Activated B cell treated with CpG ODN at 0.5 μM for 24 hours (primary cell): ENCODE measurements at regions of chr17 and their contacts with region 1.

Region 1: GRCh38 chr17:40113110-40113906 is 8.5 kb upstream of the MSL1 start:
- DNase-seq: peak; percentile 80
- ATAC-seq: peak; percentile 87
- H3K4me3 Mint-ChIP-seq: peak overlapping the region; percentile 89
- H3K27ac Mint-ChIP-seq: peak overlapping the region; percentile 88
- H3K4me1 Mint-ChIP-seq: peaks cover 54% of the 10 kb centered on the region
- H3K27me3 Mint-ChIP-seq: no peaks in the 10 kb centered on the region
- CTCF ChIP-seq: no peak

Region 2: GRCh38 chr17:38605888-38606645 is 1507.2 kb before region 1 on chr17 and contains the start of gene SRCIN1:
- CTCF ChIA-PET with region 1: no interaction called
- POLR2A ChIA-PET with region 1: no interaction called
- intact Hi-C with region 1: no loop called
- DNase-seq: peak; percentile 46
- ATAC-seq: peak; percentile 57
- H3K4me3 Mint-ChIP-seq: peak within 1 kb of the TSS; percentile 72
- H3K27ac Mint-ChIP-seq: no peak within 1 kb of the TSS
- H3K4me1 Mint-ChIP-seq: peaks cover 15% of the 10 kb centered on the region
- H3K27me3 Mint-ChIP-seq: peaks cover 59% of the 10 kb centered on the region
- CTCF ChIP-seq: peak; percentile 80
- total RNA-seq, gene SRCIN1: 0.24 and 0.35 TPM in 2 replicates

Region 3: GRCh38 chr17:39903158-39903884 is 210.0 kb before region 1 on chr17:
- CTCF ChIA-PET with region 1: no interaction called
- POLR2A ChIA-PET with region 1: no interaction called
- intact Hi-C with region 1: no loop called
- DNase-seq: no peak
- ATAC-seq: peak; percentile 37
- H3K4me3 Mint-ChIP-seq: no peak overlapping the region
- H3K27ac Mint-ChIP-seq: no peak overlapping the region
- H3K4me1 Mint-ChIP-seq: peaks cover 5% of the 10 kb centered on the region
- H3K27me3 Mint-ChIP-seq: no peaks in the 10 kb centered on the region
- CTCF ChIP-seq: no peak

Region 4: GRCh38 chr17:39927101-39927928 is 186.0 kb before region 1 on chr17 and contains the starts of genes LRRC3C and ORMDL3:
- CTCF ChIA-PET with region 1: no interaction called
- POLR2A ChIA-PET with region 1: no interaction called
- intact Hi-C with region 1: no loop called
- DNase-seq: peak; percentile 91
- ATAC-seq: peak; percentile 92
- H3K4me3 Mint-ChIP-seq: peak within 1 kb of the TSS; percentile 97
- H3K27ac Mint-ChIP-seq: peak within 1 kb of the TSS; percentile 82
- H3K4me1 Mint-ChIP-seq: peaks cover 40% of the 10 kb centered on the region
- H3K27me3 Mint-ChIP-seq: no peaks in the 10 kb centered on the region
- CTCF ChIP-seq: no peak
- total RNA-seq, gene LRRC3C: not detected in 2 replicates
- total RNA-seq, gene ORMDL3: 38.5 and 49.1 TPM in 2 replicates

Region 5: GRCh38 chr17:40018211-40019121 is 94.8 kb before region 1 on chr17:
- CTCF ChIA-PET with region 1: interaction called, 27 read pairs
- POLR2A ChIA-PET with region 1: interaction called, 3 read pairs
- intact Hi-C with region 1: loop called (anchors 1 kb)
- DNase-seq: no peak
- ATAC-seq: no peak
- H3K4me3 Mint-ChIP-seq: no peak overlapping the region
- H3K27ac Mint-ChIP-seq: no peak overlapping the region
- H3K4me1 Mint-ChIP-seq: peaks cover 5% of the 10 kb centered on the region
- H3K27me3 Mint-ChIP-seq: peaks cover 2% of the 10 kb centered on the region
- CTCF ChIP-seq: no peak

Region 6: GRCh38 chr17:40062329-40063186 is 50.8 kb before region 1 on chr17 and contains the start of gene THRA:
- CTCF ChIA-PET with region 1: interaction called, 43 read pairs
- POLR2A ChIA-PET with region 1: interaction called, 13 read pairs
- intact Hi-C with region 1: loop called (anchors 1 kb)
- DNase-seq: peak; percentile 79
- ATAC-seq: peak; percentile 93
- H3K4me3 Mint-ChIP-seq: peak within 1 kb of the TSS; percentile 87
- H3K27ac Mint-ChIP-seq: peak within 1 kb of the TSS; percentile 78
- H3K4me1 Mint-ChIP-seq: peaks cover 39% of the 10 kb centered on the region
- H3K27me3 Mint-ChIP-seq: peaks cover under 1% of the 10 kb centered on the region
- CTCF ChIP-seq: no peak
- total RNA-seq, gene THRA: 5.4 and 5.9 TPM in 2 replicates

Region 7: GRCh38 chr17:40086150-40087044 is 26.9 kb before region 1 on chr17:
- CTCF ChIA-PET with region 1: interaction called, 52 read pairs
- POLR2A ChIA-PET with region 1: interaction called, 3 read pairs
- intact Hi-C with region 1: loop called (anchors 1 kb)
- DNase-seq: peak; percentile 63
- ATAC-seq: peak; percentile 75
- H3K4me3 Mint-ChIP-seq: no peak overlapping the region
- H3K27ac Mint-ChIP-seq: no peak overlapping the region
- H3K4me1 Mint-ChIP-seq: peaks cover 6% of the 10 kb centered on the region
- H3K27me3 Mint-ChIP-seq: no peaks in the 10 kb centered on the region
- CTCF ChIP-seq: peak; percentile 26

Region 8: DNA sequence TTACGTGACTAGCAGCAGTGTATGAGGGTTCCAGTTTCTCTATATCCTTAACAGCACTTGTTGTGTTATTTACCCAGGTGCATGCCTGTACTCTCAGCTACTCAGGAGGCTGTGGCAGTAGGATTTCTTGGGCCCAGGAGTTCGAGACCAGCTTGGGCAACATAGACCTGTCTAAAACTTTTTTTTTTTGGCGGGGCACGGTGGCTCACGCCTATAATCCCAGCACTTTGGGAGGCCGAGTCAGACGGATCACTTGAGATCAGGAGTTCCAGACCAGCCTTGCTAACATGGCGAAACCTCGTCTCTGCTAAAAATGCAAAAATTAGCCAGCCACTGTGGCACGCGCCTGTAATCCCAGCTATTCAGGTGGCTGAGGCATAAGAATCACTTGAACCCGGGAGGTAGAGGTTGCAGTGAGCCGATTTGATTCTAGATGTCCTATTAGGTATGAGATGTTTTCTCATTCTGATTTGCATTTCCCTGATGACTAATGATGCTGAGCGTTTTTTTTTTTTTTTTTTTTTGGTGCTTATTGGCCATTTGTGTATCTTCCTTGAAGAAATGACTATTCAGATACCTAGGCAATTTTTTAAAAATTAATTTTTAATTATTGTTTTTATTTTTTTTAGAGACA is 40.4 kb after region 1 on chr17:
- CTCF ChIA-PET with region 1: interaction called, 8 read pairs
- POLR2A ChIA-PET with region 1: interaction called, 5 read pairs
- intact Hi-C with region 1: loop called (anchors 5 kb)
- DNase-seq: no peak
- ATAC-seq: no peak
- H3K4me3 Mint-ChIP-seq: no peak overlapping the region
- H3K27ac Mint-ChIP-seq: peak overlapping the region; percentile 90
- H3K4me1 Mint-ChIP-seq: peaks cover 39% of the 10 kb centered on the region
- H3K27me3 Mint-ChIP-seq: no peaks in the 10 kb centered on the region
- CTCF ChIP-seq: no peak

Region 9: GRCh38 chr17:40191237-40192208 is 78.2 kb after region 1 on chr17:
- CTCF ChIA-PET with region 1: interaction called, 40 read pairs
- POLR2A ChIA-PET with region 1: interaction called, 9 read pairs
- intact Hi-C with region 1: loop called (anchors 1 kb)
- DNase-seq: peak; percentile 71
- ATAC-seq: peak; percentile 94
- H3K4me3 Mint-ChIP-seq: peak overlapping the region; percentile 96
- H3K27ac Mint-ChIP-seq: peak overlapping the region; percentile 79
- H3K4me1 Mint-ChIP-seq: peaks cover 15% of the 10 kb centered on the region
- H3K27me3 Mint-ChIP-seq: peaks cover 3% of the 10 kb centered on the region
- CTCF ChIP-seq: peak; percentile 47